WTC11 (cell line): ENCODE measurements at regions of chr16 and their contacts with region 1.

Region 1: GRCh38 chr16:67641779-67642708 is 2.9 kb upstream of the CARMIL2 start:
- DNase-seq: no peak
- ATAC-seq: no peak
- H3K4me3 Mint-ChIP-seq: no peak overlapping the region
- H3K27ac Mint-ChIP-seq: no peak overlapping the region
- H3K4me1 Mint-ChIP-seq: no peaks in the 10 kb centered on the region; the same call in 1 of the 2 replicates
- H3K27me3 Mint-ChIP-seq: peaks cover 26% of the 10 kb centered on the region
- CTCF ChIP-seq: no peak

Region 2: GRCh38 chr16:67447508-67448076 is 194.5 kb before region 1 on chr16:
- CTCF ChIA-PET with region 1: no interaction called
- POLR2A ChIA-PET with region 1: no interaction called
- DNase-seq: peak; percentile 62
- ATAC-seq: no peak; the same call in 1 of the 2 replicates
- H3K4me3 Mint-ChIP-seq: no peak overlapping the region
- H3K27ac Mint-ChIP-seq: no peak overlapping the region
- H3K4me1 Mint-ChIP-seq: peaks cover 6% of the 10 kb centered on the region
- H3K27me3 Mint-ChIP-seq: no peaks in the 10 kb centered on the region; the same call in 1 of the 2 replicates
- CTCF ChIP-seq: 0 out of 2 replicates have a peak, but pooled peaks have one; percentile 16

Region 3: GRCh38 chr16:67561824-67562525 is 80.1 kb before region 1 on chr16:
- CTCF ChIA-PET with region 1: interaction called, 47 read pairs
- POLR2A ChIA-PET with region 1: interaction called, 6 read pairs
- DNase-seq: peak; percentile 94
- ATAC-seq: peak; percentile 88
- H3K4me3 Mint-ChIP-seq: peak overlapping the region; percentile 83
- H3K27ac Mint-ChIP-seq: peak overlapping the region; percentile 93
- H3K4me1 Mint-ChIP-seq: peaks cover 15% of the 10 kb centered on the region
- H3K27me3 Mint-ChIP-seq: no peaks in the 10 kb centered on the region
- CTCF ChIP-seq: no peak

Region 4: DNA sequence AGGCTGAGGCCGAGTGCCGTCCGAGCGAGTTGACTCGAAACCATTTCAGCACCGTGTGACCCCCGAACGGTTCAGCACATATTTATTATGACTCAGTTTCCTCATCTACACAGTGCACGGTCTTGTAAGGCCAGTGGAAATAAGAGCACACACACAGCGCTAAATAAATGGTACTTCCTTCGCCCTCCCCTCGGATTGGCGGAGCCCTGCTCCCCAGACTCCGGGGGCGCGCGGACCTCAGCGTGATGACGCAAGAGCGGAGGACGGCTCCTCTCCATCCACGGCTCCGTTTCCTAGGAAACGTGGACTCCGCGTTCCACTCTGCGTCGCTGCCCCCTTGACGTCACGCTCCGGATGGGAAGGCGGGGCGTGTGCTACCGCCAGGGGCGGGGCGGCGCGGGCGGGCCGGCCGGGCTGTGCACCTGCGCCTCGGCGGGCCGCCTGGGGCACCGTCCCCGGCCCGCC is 18.6 kb after region 1 on chr16 and contains the start of gene PARD6A:
- CTCF ChIA-PET with region 1: interaction called, 38 read pairs
- POLR2A ChIA-PET with region 1: no interaction called
- DNase-seq: peak; percentile 96
- ATAC-seq: peak; percentile 72
- H3K4me3 Mint-ChIP-seq: peak within 1 kb of the TSS; percentile 91
- H3K27ac Mint-ChIP-seq: peak within 1 kb of the TSS; percentile 98
- H3K4me1 Mint-ChIP-seq: peaks cover 19% of the 10 kb centered on the region
- H3K27me3 Mint-ChIP-seq: peaks cover 5% of the 10 kb centered on the region
- CTCF ChIP-seq: no peak
- total RNA-seq, gene PARD6A: 17.1 to 18.5 TPM (median 17.4 TPM) in 3 replicates

Region 5: DNA sequence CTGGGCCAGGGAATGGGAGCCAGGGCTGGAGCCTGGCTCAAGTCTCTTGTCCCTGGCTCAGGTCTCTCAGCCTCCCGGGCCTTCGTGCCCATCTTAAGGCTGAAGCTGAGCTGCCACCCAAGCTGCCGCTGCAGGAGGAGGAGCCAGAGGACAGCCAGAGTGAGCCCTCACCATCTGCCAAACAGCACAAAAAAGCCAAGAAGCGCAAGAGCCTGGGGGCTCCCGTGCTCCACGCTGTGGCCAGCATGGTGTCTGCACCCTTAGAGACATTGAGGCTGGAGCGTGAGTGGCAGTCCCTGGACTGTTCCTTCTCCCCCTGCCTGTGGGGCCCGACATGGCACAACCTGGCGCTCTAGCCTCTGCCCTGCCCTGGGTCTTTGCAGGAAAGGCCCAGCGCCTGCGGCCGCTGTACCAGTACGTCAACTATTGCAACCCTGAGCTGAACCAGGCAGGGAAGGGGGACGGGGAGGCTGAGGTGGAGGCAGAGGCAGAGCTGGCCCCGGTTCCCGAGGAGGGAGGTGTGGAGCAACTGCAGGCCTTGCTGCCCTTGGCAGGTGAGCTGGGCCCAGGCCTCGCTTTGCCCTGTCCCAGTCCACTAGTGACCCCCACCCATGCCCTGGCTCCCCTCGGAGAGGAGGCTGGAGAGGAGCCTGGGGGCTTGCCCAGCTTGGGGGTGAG is 25.9 kb after region 1 on chr16:
- CTCF ChIA-PET with region 1: interaction called, 38 read pairs
- POLR2A ChIA-PET with region 1: no interaction called
- DNase-seq: peak; percentile 82
- ATAC-seq: peak; percentile 66
- H3K4me3 Mint-ChIP-seq: peak overlapping the region; percentile 84; the same call in 1 of the 2 replicates
- H3K27ac Mint-ChIP-seq: no peak overlapping the region
- H3K4me1 Mint-ChIP-seq: peaks cover 11% of the 10 kb centered on the region
- H3K27me3 Mint-ChIP-seq: peaks cover 6% of the 10 kb centered on the region
- CTCF ChIP-seq: no peak